ENCODE measurements at regions of chr6 and their contacts with region 1.

Region 1: GRCh38 chr6:142416179-142416578 is 114.4 kb downstream of the ADGRG6 start:
- DNase-seq: peak; percentile 93
- H3K4me3 ChIP-seq: no peak overlapping the region
- H3K27ac ChIP-seq: peak overlapping the region; percentile 99
- H3K4me1 ChIP-seq: peaks cover 56% of the 10 kb centered on the region
- H3K27me3 ChIP-seq: no peaks in the 10 kb centered on the region
- CTCF ChIP-seq: no peak
- POLR2A ChIP-seq: peak; percentile 22

Region 2: GRCh38 chr6:142323377-142324040 is 92.7 kb before region 1 on chr6:
- CTCF ChIA-PET with region 1: no interaction called
- POLR2A ChIA-PET with region 1: no interaction called
- dilution Hi-C with region 1: no loop called
- intact Hi-C with region 1: no loop called
- DNase-seq: no peak
- H3K4me3 ChIP-seq: no peak overlapping the region
- H3K27ac ChIP-seq: no peak overlapping the region
- H3K4me1 ChIP-seq: peaks cover 12% of the 10 kb centered on the region
- H3K27me3 ChIP-seq: no peaks in the 10 kb centered on the region
- CTCF ChIP-seq: no peak
- POLR2A ChIP-seq: no peak

Region 3: DNA sequence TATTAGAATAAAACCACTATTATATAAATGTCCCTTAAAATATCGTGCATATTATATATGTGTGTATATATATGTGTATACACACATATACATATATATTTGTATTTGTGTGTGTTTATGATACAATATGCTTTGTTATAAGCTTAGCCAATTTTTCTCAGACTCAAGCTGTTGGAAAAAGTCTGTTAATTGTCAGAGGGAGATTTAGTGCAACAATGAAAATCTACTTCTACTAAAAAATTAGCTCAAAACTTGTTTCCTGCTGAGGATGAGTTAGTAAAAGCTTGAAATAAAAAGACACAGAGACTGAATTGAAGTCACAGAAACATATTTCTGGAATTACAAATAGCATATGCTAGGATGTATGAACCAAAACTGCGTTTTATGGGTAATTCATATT is 35.0 kb before region 1 on chr6:
- CTCF ChIA-PET with region 1: no interaction called
- POLR2A ChIA-PET with region 1: no interaction called
- dilution Hi-C with region 1: no loop called
- intact Hi-C with region 1: no loop called
- DNase-seq: no peak
- H3K4me3 ChIP-seq: no peak overlapping the region
- H3K27ac ChIP-seq: no peak overlapping the region
- H3K4me1 ChIP-seq: peaks cover 31% of the 10 kb centered on the region
- H3K27me3 ChIP-seq: no peaks in the 10 kb centered on the region
- CTCF ChIP-seq: no peak
- POLR2A ChIP-seq: no peak

Region 4: DNA sequence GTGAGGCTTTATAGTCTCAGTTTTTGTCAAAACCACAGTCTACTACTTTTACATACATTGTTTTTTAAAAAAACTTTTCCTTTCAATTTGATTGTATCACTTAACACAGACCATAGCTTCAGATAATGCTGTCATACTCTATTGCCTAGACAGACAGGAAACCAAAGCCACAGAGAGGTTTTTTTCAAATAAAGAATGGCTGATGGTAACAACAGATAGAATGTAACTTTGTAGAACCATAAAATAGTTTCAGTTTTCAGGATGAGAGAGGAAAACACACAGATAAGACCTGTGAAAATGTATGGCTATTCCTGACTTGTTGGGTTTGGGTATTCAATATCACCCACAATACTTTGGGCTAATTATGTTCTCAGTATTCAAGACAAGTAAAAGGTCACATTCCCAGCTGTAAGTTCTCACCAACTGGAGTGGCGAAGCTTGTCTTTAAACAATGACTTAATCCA is 20.4 kb before region 1 on chr6:
- CTCF ChIA-PET with region 1: interaction called, 4 read pairs
- POLR2A ChIA-PET with region 1: interaction called, 3 read pairs
- dilution Hi-C with region 1: no loop called
- intact Hi-C with region 1: loop called (anchors 1 kb)
- DNase-seq: peak; percentile 94
- H3K4me3 ChIP-seq: no peak overlapping the region
- H3K27ac ChIP-seq: peak overlapping the region; percentile 99
- H3K4me1 ChIP-seq: peaks cover 47% of the 10 kb centered on the region
- H3K27me3 ChIP-seq: no peaks in the 10 kb centered on the region
- CTCF ChIP-seq: no peak
- POLR2A ChIP-seq: no peak